ENCODE measurements at regions of chr1 and their contacts with region 1.

Region 1: GRCh38 chr1:178310685-178311105 is 186.1 kb downstream of the CLEC20A start:
- DNase-seq: peak; percentile 34
- H3K4me3 ChIP-seq: no peak overlapping the region
- CTCF ChIP-seq: peak; percentile 43

Region 2: GRCh38 chr1:178039891-178040290 is 270.8 kb before region 1 on chr1:
- CTCF ChIA-PET with region 1: no interaction called
- POLR2A ChIA-PET with region 1: no interaction called
- DNase-seq: no peak
- H3K4me3 ChIP-seq: no peak overlapping the region
- CTCF ChIP-seq: no peak

Region 3: DNA sequence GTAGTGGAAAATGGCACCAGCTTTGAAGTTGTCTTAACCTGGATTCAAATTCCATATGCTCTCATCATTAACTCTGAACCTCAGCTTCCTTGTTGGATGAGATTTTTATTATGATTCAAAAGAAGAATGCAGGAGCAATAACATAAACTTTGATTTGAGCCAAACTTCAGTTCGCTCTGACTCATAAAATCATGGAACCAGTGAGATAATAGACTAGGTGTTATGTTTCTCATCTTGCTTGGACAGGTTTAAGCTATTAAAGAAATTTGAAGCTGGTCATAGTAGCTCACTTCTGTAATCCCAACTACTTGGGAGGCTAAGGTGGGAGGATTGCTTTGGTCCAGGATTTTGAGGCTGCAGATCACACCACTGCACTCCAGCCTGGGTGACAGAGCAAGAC is 13.3 kb after region 1 on chr1:
- CTCF ChIA-PET with region 1: interaction called, 29 read pairs
- POLR2A ChIA-PET with region 1: no interaction called
- DNase-seq: no peak
- H3K4me3 ChIP-seq: no peak overlapping the region
- CTCF ChIP-seq: no peak

Measured in AG04449 (cell line).